ENCODE measurements at regions of chr12 and their contacts with region 1.

Region 1: DNA sequence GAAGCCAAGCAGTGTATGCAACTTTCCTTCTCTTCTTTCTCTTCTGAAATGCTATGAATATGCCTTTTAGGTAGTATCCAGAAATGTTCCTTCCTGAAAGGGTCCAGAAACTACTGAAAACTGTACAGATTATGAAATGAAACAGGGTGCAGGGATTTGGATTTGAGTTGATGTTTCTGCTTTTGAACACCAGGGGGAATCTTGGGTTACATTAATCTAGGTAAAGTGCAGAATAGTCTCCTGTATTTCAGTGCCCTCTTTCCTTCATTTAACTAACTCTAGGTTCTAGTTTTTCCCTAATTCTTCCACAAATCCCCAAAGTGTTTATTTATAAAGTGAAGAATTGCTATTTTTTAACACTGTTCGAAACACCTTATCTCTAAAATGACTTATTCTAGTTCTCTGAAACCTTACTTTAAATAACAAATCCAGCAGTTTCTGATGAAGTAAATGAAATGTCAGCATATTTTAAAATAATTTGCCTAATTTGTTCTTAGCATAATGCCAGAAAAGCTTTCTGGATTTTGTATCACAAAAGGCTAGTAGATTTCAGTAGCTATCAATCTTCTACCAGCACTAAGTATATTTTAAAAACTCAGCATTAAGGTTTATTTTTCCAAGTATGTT is 111.9 kb downstream of the LRRK2 start:
- DNase-seq: peak; percentile 37
- H3K4me3 ChIP-seq: no peak overlapping the region
- H3K27ac ChIP-seq: no peak overlapping the region
- H3K4me1 ChIP-seq: no peaks in the 10 kb centered on the region
- H3K27me3 ChIP-seq: no peaks in the 10 kb centered on the region
- CTCF ChIP-seq: peak; percentile 65

Region 2: GRCh38 chr12:40614923-40615322 is 278.2 kb after region 1 on chr12:
- CTCF ChIA-PET with region 1: no interaction called
- POLR2A ChIA-PET with region 1: no interaction called
- intact Hi-C with region 1: loop called (anchors 10 kb)
- DNase-seq: no peak
- H3K4me3 ChIP-seq: no peak overlapping the region
- H3K27ac ChIP-seq: no peak overlapping the region
- H3K4me1 ChIP-seq: no peaks in the 10 kb centered on the region
- H3K27me3 ChIP-seq: no peaks in the 10 kb centered on the region
- CTCF ChIP-seq: no peak

Measured in A673 (cell line).